Natural killer cell (primary cell): ENCODE measurements at regions of chr6 and their contacts with region 1.

Region 1: DNA sequence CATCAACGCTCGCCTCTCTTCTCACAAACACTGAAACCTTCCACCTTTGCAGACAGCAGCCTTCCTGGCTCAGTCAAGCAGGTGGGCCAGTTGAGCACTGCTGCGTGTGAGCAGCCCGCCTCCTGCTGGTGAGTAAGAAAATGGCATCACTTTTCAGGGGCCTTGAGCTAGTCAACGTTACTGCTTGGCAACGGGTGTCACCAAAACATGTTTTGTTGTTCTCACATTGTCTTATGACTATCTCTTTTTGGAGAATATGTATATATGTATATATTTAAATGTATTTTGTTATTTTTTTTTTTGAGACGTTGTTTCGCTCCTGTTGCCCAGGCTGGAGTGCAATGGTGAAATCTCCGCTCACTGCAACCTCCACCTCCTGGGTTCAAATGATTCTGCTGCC is 97.0 kb upstream of the AGPAT4 start:
- DNase-seq: peak; percentile 70 to 84
- ATAC-seq: peak; percentile 86 to 92 (median 90)
- H3K4me3 ChIP-seq: no peak overlapping the region
- H3K4me3 Mint-ChIP-seq: no peak overlapping the region
- H3K27ac ChIP-seq: no peak overlapping the region
- H3K27ac Mint-ChIP-seq: peak overlapping the region in 1 of 2 donors; percentile 55
- H3K4me1 ChIP-seq: peaks cover 2% of the 10 kb centered on the region
- H3K4me1 Mint-ChIP-seq: peaks cover 0 to 5% of the 10 kb centered on the region in 2 donors
- H3K27me3 ChIP-seq: no peaks in the 10 kb centered on the region
- H3K27me3 Mint-ChIP-seq: no peaks in the 10 kb centered on the region
- CTCF ChIP-seq: peak; percentile 95

Region 2: GRCh38 chr6:160930547-160931377 is 440.1 kb before region 1 on chr6:
- intact Hi-C with region 1: loop called (anchors 1 kb)
- DNase-seq: peak; percentile 51 to 70
- ATAC-seq: peak; percentile 50 to 86 (median 68)
- H3K4me3 ChIP-seq: no peak overlapping the region
- H3K4me3 Mint-ChIP-seq: no peak overlapping the region
- H3K27ac ChIP-seq: no peak overlapping the region
- H3K27ac Mint-ChIP-seq: no peak overlapping the region
- H3K4me1 ChIP-seq: peaks cover 6% of the 10 kb centered on the region
- H3K4me1 Mint-ChIP-seq: no peaks in the 10 kb centered on the region
- H3K27me3 ChIP-seq: peaks cover 13% of the 10 kb centered on the region
- H3K27me3 Mint-ChIP-seq: peaks cover 26 to 35% of the 10 kb centered on the region in 2 donors
- CTCF ChIP-seq: peak; percentile 84

Region 3: GRCh38 chr6:161101517-161101916 is 269.4 kb before region 1 on chr6:
- intact Hi-C with region 1: loop called (anchors 2 kb)
- DNase-seq: peak in 1 of 2 donors; percentile 22
- ATAC-seq: peak in 2 of 3 donors; percentile 50 to 52
- H3K4me3 ChIP-seq: no peak overlapping the region
- H3K4me3 Mint-ChIP-seq: no peak overlapping the region
- H3K27ac ChIP-seq: no peak overlapping the region
- H3K27ac Mint-ChIP-seq: no peak overlapping the region
- H3K4me1 ChIP-seq: no peaks in the 10 kb centered on the region
- H3K4me1 Mint-ChIP-seq: peaks cover 0 to 6% of the 10 kb centered on the region in 2 donors
- H3K27me3 ChIP-seq: no peaks in the 10 kb centered on the region
- H3K27me3 Mint-ChIP-seq: no peaks in the 10 kb centered on the region
- CTCF ChIP-seq: peak; percentile 2

Region 4: DNA sequence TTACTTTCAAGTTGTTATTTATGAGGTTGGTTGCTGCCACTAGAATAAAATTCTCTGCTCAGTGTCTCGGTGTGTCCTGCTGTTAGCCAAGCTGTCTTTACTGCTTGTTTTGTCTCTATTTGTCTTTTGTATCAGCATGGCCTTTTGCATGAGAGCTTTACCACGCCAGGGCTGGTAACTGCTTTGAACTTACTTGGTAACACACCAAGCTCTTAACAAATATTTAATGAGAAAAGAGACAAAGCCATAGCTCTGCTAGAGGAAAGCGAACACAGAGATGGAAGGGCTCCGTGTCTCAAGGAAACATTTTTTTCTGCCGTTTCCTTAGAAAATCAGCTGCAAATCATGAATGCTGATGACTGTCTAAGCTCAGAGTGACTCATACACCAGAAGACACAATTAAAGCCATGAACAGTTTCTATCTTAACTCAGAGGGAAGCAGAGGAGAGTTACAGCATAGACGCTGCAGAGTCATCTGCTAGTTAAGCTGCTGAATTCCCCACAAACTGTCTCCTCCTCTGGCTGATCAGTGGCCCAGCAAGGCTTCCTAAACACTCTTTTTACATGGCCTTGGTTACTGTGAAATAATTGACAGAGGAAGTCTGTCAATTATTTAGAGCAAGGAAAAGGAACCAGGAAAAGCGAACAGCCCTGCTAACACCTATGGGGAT is 141.8 kb before region 1 on chr6:
- intact Hi-C with region 1: loop called (anchors 5 kb)
- DNase-seq: no peak
- ATAC-seq: no peak
- H3K4me3 ChIP-seq: no peak overlapping the region
- H3K4me3 Mint-ChIP-seq: peak overlapping the region; percentile 49
- H3K27ac ChIP-seq: no peak overlapping the region
- H3K27ac Mint-ChIP-seq: peak overlapping the region; percentile 24 to 87
- H3K4me1 ChIP-seq: peaks cover 49% of the 10 kb centered on the region
- H3K4me1 Mint-ChIP-seq: peaks cover 49 to 61% of the 10 kb centered on the region in 2 donors
- H3K27me3 ChIP-seq: no peaks in the 10 kb centered on the region
- H3K27me3 Mint-ChIP-seq: peaks cover 5 to 6% of the 10 kb centered on the region in 2 donors
- CTCF ChIP-seq: no peak